CD14-positive monocyte (primary cell): ENCODE measurements at regions of chr14 and their contacts with region 1.

Region 1: GRCh38 chr14:94136575-94137331 is 7.3 kb upstream of the IFI27L2 start:
- DNase-seq: peak; percentile 70 to 82 (median 76)
- H3K4me3 ChIP-seq: no peak overlapping the region
- H3K4me3 Mint-ChIP-seq: no peak overlapping the region
- H3K27ac ChIP-seq: no peak overlapping the region
- H3K27ac Mint-ChIP-seq: no peak overlapping the region
- H3K4me1 ChIP-seq: no peaks in the 10 kb centered on the region
- H3K4me1 Mint-ChIP-seq: peaks cover 2% of the 10 kb centered on the region
- H3K27me3 ChIP-seq: no peaks in the 10 kb centered on the region
- H3K27me3 Mint-ChIP-seq: peaks cover 5 to 15% (median 13%) of the 10 kb centered on the region in 3 donors
- CTCF ChIP-seq: peak; percentile 96

Region 2: DNA sequence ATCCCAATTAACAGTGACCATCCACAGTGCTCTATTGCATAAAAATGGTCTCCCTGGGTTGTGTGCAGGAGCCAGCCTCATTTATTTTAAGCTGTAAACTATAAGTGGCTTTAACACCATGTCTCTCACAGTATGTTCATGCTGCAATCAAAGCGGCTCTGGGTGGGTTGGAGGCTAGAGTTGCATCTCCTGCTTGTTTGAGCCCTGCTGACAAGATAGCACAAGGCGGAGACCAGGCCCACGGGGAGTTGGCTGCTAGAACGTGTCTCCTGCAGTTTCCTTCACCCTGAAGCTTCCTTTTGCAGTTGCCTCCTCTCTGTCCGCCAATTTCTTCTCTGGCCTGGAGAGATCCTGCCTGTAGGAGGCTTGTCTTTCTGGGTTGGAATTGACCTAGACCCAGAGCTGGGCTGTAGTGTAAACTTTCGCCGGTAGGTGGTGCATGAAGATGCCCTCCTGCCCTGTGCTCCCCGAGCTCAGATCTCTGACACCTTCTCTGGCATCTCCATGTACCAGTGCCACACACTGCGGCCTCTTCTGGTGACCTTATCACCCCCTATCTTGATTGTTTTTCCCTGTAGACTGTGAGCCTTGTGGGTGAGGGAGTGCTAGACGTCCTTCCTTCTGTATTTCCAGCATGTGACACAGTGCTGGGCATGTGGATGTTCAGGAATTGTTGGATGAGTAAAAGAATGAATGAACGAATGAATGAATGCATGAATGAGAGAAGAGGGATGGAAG is 100.3 kb before region 1 on chr14:
- intact Hi-C with region 1: loop called (anchors 2 to 5 kb)
- DNase-seq: peak; percentile 50 to 59 (median 53)
- H3K4me3 ChIP-seq: no peak overlapping the region
- H3K4me3 Mint-ChIP-seq: no peak overlapping the region
- H3K27ac ChIP-seq: no peak overlapping the region
- H3K27ac Mint-ChIP-seq: peak overlapping the region in 1 of 7 donors; percentile 42
- H3K4me1 ChIP-seq: no peaks in the 10 kb centered on the region
- H3K4me1 Mint-ChIP-seq: no peaks in the 10 kb centered on the region
- H3K27me3 ChIP-seq: no peaks in the 10 kb centered on the region
- H3K27me3 Mint-ChIP-seq: peaks cover 0 to 2% (median under 1%) of the 10 kb centered on the region in 3 donors
- CTCF ChIP-seq: peak; percentile 87